Activated T-helper 1 cell treated with anti-CD3 and anti-CD28 coated beads, Interleukin-12 subunit alpha, Interleukin-12 subunit beta, Interleukin-2, Interleukin-4 antibody, amounts not matched to agents 30 ng/mL and 10 ng/mL and 1 ng/mL, durations not matched to agents 14 hours and 24 hours and 36 hours (primary cell): ENCODE measurements at regions of chr19 and their contacts with region 1.

Region 1: GRCh38 chr19:18281082-18282020 is at the start of gene JUND:
- DNase-seq: peak; percentile 98
- H3K4me3 Mint-ChIP-seq: peak within 1 kb of the TSS; percentile 88
- H3K27ac Mint-ChIP-seq: peak within 1 kb of the TSS; percentile 98
- H3K4me1 Mint-ChIP-seq: peaks cover 49% of the 10 kb centered on the region
- H3K27me3 Mint-ChIP-seq: no peaks in the 10 kb centered on the region
- total RNA-seq, gene JUND: 431 and 455 TPM in 2 replicates

Region 2: DNA sequence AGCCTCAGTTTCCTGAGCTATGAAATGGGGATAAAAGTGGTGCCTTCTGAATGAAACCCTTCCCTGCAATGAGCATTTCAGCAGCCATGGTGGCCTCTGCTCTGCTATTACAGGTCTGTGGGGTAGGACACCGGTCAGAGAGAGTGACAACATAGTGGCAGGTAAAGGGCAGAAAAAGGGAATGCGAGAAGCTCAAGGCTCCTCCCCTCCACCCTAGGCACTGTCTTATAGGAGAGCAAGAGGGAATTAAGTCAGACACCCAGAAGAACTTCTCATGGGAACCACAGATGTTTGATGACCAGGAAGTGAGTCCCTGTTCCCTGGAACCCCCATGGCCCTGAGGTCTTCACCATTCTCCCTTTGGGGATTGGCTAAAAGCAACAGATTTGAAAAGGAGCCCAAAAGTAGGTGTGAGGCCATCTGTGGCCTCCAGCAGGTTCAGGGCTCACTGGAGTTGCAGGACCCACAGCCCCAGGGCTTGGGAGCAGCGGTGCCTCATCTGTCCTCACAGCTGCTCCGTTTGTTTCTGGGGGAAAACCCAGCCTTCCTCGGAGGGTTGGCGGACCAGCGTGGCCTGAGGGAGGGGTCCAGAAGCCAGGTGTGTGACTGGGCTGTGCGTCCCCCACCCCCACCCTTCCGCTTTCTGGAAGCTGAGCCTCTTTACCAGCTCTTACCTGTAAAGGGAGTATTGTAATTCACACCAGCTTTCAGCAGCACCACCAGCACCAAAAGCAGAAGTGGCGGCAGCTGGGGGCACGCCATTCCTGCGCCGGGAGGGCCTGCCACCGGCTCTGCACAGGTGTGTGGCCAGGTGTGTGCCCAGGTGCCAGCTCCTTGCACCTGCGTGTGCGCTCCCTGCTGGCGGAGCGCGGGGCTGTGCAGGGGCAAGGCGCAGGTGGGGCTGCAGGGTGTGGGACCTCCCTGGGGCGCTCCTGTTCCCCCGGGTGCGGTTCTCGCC is 26.5 kb before region 1 on chr19:
- intact Hi-C with region 1: no loop called
- DNase-seq: no peak
- H3K4me3 Mint-ChIP-seq: no peak overlapping the region
- H3K27ac Mint-ChIP-seq: no peak overlapping the region
- H3K4me1 Mint-ChIP-seq: no peaks in the 10 kb centered on the region
- H3K27me3 Mint-ChIP-seq: peaks cover 16% of the 10 kb centered on the region

Region 3: GRCh38 chr19:18266771-18267686 is 14.3 kb before region 1 on chr19:
- intact Hi-C with region 1: no loop called
- DNase-seq: no peak
- H3K4me3 Mint-ChIP-seq: no peak overlapping the region
- H3K27ac Mint-ChIP-seq: no peak overlapping the region
- H3K4me1 Mint-ChIP-seq: peaks cover 4% of the 10 kb centered on the region
- H3K27me3 Mint-ChIP-seq: no peaks in the 10 kb centered on the region

Region 4: DNA sequence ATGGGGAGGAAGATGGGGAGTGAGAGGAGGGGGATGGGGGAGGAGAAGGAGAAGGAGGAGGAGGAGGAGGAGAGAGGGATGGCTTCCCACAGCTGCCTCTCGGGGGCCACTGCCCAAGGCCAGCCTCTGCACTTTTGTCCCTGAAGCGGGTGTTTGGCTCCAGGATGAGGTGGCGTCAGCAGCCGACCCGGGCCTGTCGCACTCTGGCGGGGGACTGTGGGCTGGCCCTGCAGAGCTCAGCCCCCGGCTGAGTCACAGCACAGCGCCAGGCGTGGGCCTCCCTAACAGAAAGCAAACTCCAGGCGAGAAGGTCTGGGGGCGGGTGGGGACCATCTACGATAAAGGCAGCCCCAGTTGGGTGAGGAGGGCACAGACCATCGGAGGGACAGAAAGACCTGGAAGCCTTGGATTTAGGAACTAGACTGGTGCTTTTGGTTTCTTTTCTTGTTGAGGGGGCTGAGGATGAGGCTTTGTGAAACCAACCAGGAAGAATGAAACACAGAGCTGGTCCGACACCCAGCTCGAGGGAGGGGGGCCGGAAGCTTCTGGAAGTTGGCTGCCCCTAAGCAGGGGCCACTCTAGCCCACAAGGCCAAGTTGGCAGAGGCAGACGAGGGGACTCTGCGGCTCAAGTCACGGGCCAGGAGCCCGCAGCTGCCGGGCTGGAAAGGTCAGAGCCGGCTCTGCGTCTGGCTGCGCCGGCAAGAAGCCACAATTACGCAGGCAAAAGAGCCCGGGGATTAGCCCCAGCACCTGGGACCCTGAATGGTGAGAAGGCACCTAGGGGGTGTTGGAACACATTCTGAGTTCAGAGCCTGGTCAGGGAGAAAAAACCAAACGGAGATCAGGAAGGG is 23.3 kb after region 1 on chr19:
- intact Hi-C with region 1: loop called (anchors 1 kb)
- DNase-seq: peak; percentile 77
- H3K4me3 Mint-ChIP-seq: peak overlapping the region; percentile 92
- H3K27ac Mint-ChIP-seq: peak overlapping the region; percentile 98
- H3K4me1 Mint-ChIP-seq: peaks cover 40% of the 10 kb centered on the region
- H3K27me3 Mint-ChIP-seq: peaks cover 1% of the 10 kb centered on the region

Region 5: GRCh38 chr19:18322759-18323460 is 41.6 kb after region 1 on chr19 and contains the start of gene LSM4:
- intact Hi-C with region 1: loop called (anchors 1 kb)
- DNase-seq: peak; percentile 99
- H3K4me3 Mint-ChIP-seq: peak within 1 kb of the TSS; percentile 95
- H3K27ac Mint-ChIP-seq: peak within 1 kb of the TSS; percentile 93
- H3K4me1 Mint-ChIP-seq: peaks cover 53% of the 10 kb centered on the region
- H3K27me3 Mint-ChIP-seq: no peaks in the 10 kb centered on the region
- total RNA-seq, gene LSM4: 198 and 200 TPM in 2 replicates

Region 6: GRCh38 chr19:18328340-18329034 is 47.1 kb after region 1 on chr19:
- intact Hi-C with region 1: loop called (anchors 1 kb)
- DNase-seq: peak; percentile 86
- H3K4me3 Mint-ChIP-seq: peak overlapping the region; percentile 31
- H3K27ac Mint-ChIP-seq: peak overlapping the region; percentile 63
- H3K4me1 Mint-ChIP-seq: peaks cover 19% of the 10 kb centered on the region
- H3K27me3 Mint-ChIP-seq: no peaks in the 10 kb centered on the region

Region 7: DNA sequence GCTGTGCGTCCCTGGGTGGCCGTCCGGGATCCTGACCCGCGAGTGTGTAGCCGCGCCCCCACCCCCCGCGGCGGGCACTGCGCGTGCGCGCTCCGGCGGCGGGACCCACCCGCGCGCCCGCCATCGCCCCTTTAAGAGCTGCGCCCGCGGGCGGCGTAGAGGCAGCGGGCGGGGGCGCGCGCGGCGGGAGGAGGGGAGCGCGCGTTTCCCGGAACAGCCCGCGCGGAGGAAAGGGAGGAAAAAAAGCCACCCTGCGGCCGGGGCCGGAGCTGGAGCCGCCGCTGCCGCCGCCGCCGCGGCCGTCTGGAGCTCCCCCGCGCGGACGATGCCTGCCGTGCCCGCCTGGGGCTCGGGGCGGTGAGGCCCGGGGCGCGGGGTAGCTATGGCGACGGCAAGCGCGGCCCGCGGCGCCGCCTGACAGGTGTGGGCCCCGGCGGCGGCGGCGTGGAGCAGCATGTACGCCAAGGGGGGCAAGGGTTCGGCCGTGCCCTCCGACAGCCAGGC is 137.9 kb after region 1 on chr19 and contains the start of gene SSBP4:
- intact Hi-C with region 1: loop called (anchors 5 kb)
- DNase-seq: peak; percentile 75
- H3K4me3 Mint-ChIP-seq: peak within 1 kb of the TSS; percentile 89
- H3K27ac Mint-ChIP-seq: peak within 1 kb of the TSS; percentile 82
- H3K4me1 Mint-ChIP-seq: peaks cover 78% of the 10 kb centered on the region
- H3K27me3 Mint-ChIP-seq: peaks cover 5% of the 10 kb centered on the region
- total RNA-seq, gene SSBP4: 135 and 141 TPM in 2 replicates